CD14-positive monocyte (primary cell): ENCODE measurements at regions of chr11 and their contacts with region 1.

Region 1: DNA sequence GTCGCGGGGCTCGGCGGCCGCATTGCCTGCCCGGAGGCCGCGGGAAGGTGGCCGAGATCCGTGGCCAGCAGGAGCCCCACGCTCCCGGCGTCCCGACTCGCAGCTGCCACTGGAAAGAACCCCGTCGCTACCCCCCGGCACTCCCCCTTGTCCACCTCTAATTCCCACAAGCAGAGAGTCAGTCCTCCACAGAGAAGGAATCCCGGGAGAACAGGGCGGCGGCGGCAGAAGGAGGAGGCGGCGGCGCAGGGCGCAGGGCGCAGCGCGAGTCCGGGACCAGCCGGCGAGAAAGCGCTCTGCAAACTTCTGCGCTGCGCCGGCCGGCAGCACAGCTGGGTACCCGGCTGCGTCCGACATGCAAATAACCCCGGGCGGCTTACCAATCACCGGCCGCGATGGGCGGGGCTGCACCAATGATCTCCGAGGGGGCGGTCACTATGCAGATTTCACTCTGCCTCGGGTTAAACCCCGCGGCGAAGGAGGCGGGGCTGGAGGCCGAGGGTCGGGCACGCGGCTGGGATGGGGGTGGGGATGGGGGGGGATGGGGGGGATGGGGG is at the start of gene ABTB2:
- DNase-seq: peak; percentile 93 to 95 (median 93)
- H3K4me3 ChIP-seq: peak within 1 kb of the TSS; percentile 55 to 86 (median 81)
- H3K4me3 Mint-ChIP-seq: peak within 1 kb of the TSS; percentile 82 to 97
- H3K27ac ChIP-seq: peak within 1 kb of the TSS in 1 of 2 donors; percentile 40
- H3K27ac Mint-ChIP-seq: peak within 1 kb of the TSS in 6 of 7 donors; percentile 26 to 70 (median 63)
- H3K4me1 ChIP-seq: peaks cover 30 to 39% of the 10 kb centered on the region in 2 donors
- H3K4me1 Mint-ChIP-seq: peaks cover 33% of the 10 kb centered on the region
- H3K27me3 ChIP-seq: peaks cover 13 to 18% of the 10 kb centered on the region in 2 donors
- H3K27me3 Mint-ChIP-seq: peaks cover 22 to 43% (median 27%) of the 10 kb centered on the region in 3 donors
- CTCF ChIP-seq: no peak
- polyA plus RNA-seq, gene ABTB2: 0.25 to 1.7 (median 0.26) TPM

Region 2: DNA sequence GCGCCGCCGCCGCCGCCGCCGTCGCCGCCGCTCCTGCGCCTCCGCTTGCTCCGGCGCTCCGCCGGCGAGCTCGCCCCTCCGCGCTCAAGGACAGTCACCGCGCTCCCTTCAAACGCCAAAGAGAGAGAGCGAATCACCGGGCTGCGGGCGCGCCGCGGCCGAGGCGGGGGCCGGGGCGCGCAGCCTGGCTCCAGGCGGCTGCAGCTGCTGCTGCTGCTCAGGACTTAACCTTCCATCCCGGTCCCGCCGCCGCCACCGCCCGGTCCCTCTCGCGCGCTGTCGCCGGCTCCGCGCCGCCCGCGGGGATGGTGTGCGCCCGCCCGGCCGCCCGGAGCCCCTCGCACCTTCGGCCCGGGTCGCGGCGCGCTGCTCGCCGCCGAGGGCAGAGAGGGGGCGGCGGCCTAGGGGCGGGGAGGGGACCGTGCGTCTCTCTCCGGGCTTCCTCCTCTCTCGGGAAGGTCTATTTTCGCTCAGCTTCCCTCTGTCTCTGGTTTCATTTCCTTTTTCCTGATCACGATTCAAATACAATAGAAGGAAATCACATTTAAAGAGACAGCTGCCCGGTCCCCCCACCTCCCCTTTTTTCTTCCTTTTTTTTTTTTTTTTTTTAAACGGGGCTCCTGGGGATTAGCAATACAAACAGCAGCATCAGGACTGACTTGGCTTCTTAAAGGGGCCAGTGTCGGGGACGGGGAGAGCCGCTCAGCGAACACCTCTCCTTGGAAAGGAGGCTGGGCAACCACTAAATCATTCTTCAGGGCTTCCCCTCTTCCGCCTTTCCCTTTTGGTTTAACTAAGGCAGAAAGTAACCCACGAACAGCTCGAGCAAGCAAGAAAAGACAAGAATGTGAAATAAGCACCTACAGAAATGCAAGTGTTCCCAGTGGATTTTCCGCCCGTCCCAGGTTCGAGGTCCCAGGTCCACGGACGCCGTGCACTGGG is 488.0 kb before region 1 on chr11:
- intact Hi-C with region 1: loop called in 1 of 2 experiments (anchors 10 kb)
- DNase-seq: peak; percentile 81 to 92 (median 89)
- H3K4me3 ChIP-seq: peak overlapping the region; percentile 63 to 97 (median 94)
- H3K4me3 Mint-ChIP-seq: peak overlapping the region; percentile 97 to 98
- H3K27ac ChIP-seq: peak overlapping the region; percentile 86
- H3K27ac Mint-ChIP-seq: peak overlapping the region; percentile 95 to 99 (median 98)
- H3K4me1 ChIP-seq: peaks cover 62 to 76% of the 10 kb centered on the region in 2 donors
- H3K4me1 Mint-ChIP-seq: peaks cover 69% of the 10 kb centered on the region
- H3K27me3 ChIP-seq: no peaks in the 10 kb centered on the region
- H3K27me3 Mint-ChIP-seq: no peaks in the 10 kb centered on the region
- CTCF ChIP-seq: no peak

Region 3: GRCh38 chr11:34105079-34105956 is 252.5 kb before region 1 on chr11 and contains the start of gene NAT10:
- intact Hi-C with region 1: loop called in 1 of 2 experiments (anchors 10 kb)
- DNase-seq: peak; percentile 100
- H3K4me3 ChIP-seq: peak within 1 kb of the TSS; percentile 47 to 89 (median 82)
- H3K4me3 Mint-ChIP-seq: peak within 1 kb of the TSS; percentile 93 to 94
- H3K27ac ChIP-seq: peak within 1 kb of the TSS; percentile 86 to 98
- H3K27ac Mint-ChIP-seq: peak within 1 kb of the TSS; percentile 96 to 99 (median 98)
- H3K4me1 ChIP-seq: peaks cover 16 to 24% of the 10 kb centered on the region in 2 donors
- H3K4me1 Mint-ChIP-seq: peaks cover 25% of the 10 kb centered on the region
- H3K27me3 ChIP-seq: no peaks in the 10 kb centered on the region
- H3K27me3 Mint-ChIP-seq: no peaks in the 10 kb centered on the region
- CTCF ChIP-seq: peak; percentile 22
- polyA plus RNA-seq, gene NAT10: 10.1 to 13.3 (median 13.1) TPM

Region 4: GRCh38 chr11:34250732-34251639 is 106.8 kb before region 1 on chr11:
- intact Hi-C with region 1: loop called (anchors 5 to 10 kb)
- DNase-seq: peak; percentile 95 to 97 (median 97)
- H3K4me3 ChIP-seq: peak overlapping the region in 2 of 3 experiments; percentile 2 to 61
- H3K4me3 Mint-ChIP-seq: peak overlapping the region; percentile 54 to 72
- H3K27ac ChIP-seq: peak overlapping the region; percentile 33 to 88
- H3K27ac Mint-ChIP-seq: peak overlapping the region; percentile 68 to 95 (median 87)
- H3K4me1 ChIP-seq: peaks cover 23 to 32% of the 10 kb centered on the region in 2 donors
- H3K4me1 Mint-ChIP-seq: peaks cover 33% of the 10 kb centered on the region
- H3K27me3 ChIP-seq: no peaks in the 10 kb centered on the region
- H3K27me3 Mint-ChIP-seq: peaks cover 0 to 2% (median 2%) of the 10 kb centered on the region in 3 donors
- CTCF ChIP-seq: no peak

Region 5: GRCh38 chr11:34308913-34309585 is 48.7 kb before region 1 on chr11:
- intact Hi-C with region 1: loop called (anchors 5 to 10 kb)
- DNase-seq: peak; percentile 82 to 93 (median 88)
- H3K4me3 ChIP-seq: peak overlapping the region in 1 of 3 experiments; percentile 32
- H3K4me3 Mint-ChIP-seq: peak overlapping the region in 1 of 2 donors; percentile 80
- H3K27ac ChIP-seq: peak overlapping the region; percentile 43 to 81
- H3K27ac Mint-ChIP-seq: peak overlapping the region; percentile 91 to 96 (median 93)
- H3K4me1 ChIP-seq: peaks cover 27 to 33% of the 10 kb centered on the region in 2 donors
- H3K4me1 Mint-ChIP-seq: peaks cover 33% of the 10 kb centered on the region
- H3K27me3 ChIP-seq: no peaks in the 10 kb centered on the region
- H3K27me3 Mint-ChIP-seq: peaks cover 0 to 4% (median 0%) of the 10 kb centered on the region in 3 donors
- CTCF ChIP-seq: peak; percentile 43